GM12878 (cell line): ENCODE measurements at regions of chr1 and their contacts with region 1.

Region 1: GRCh38 chr1:26900001-26900814 is at the start of gene GPATCH3:
- DNase-seq: peak; percentile 79
- ATAC-seq: peak; percentile 96
- H3K4me3 ChIP-seq: peak within 1 kb of the TSS; percentile 85
- H3K27ac ChIP-seq: peak within 1 kb of the TSS; percentile 77
- H3K4me1 ChIP-seq: peaks cover 6% of the 10 kb centered on the region; the same call in 1 of the 2 replicates
- H3K27me3 ChIP-seq: no peaks in the 10 kb centered on the region
- CTCF ChIP-seq: no peak
- EP300 ChIP-seq: no peak
- POLR2A ChIP-seq: peak; percentile 98
- RAD21 ChIP-seq: no peak
- polyA plus RNA-seq, gene GPATCH3: 0.56 to 2.9 TPM

Region 2: DNA sequence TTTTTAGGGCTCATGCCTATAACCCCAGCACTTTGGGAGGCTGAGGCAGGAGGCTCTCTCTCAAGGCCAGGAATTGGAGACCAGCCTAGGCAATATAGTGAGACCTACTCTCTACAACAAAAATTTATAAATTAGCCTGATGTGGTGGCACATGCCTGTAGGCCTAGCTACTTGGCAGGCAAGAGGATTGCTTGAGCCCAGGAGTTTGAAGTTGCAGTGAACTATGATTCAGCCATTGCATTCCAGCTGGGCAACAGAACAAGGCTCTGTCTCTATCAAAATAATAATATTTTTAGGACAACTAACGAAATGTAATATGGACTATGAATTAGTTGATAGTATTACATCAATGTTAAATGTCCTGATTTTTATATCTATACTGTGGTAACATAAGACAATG is 273.2 kb before region 1 on chr1:
- CTCF ChIA-PET with region 1: no interaction called
- POLR2A ChIA-PET with region 1: no interaction called
- RAD21 ChIA-PET with region 1: no interaction called
- SMC1A ChIA-PET with region 1: no interaction called
- in situ Hi-C with region 1: no loop called
- intact Hi-C with region 1: no loop called
- DNase-seq: no peak
- ATAC-seq: no peak
- H3K4me3 ChIP-seq: no peak overlapping the region
- H3K27ac ChIP-seq: no peak overlapping the region
- H3K4me1 ChIP-seq: peaks cover 10% of the 10 kb centered on the region
- H3K27me3 ChIP-seq: no peaks in the 10 kb centered on the region
- CTCF ChIP-seq: no peak
- EP300 ChIP-seq: no peak
- POLR2A ChIP-seq: no peak
- RAD21 ChIP-seq: no peak

Region 3: GRCh38 chr1:26889551-26890466 is 10.4 kb before region 1 on chr1 and contains the start of gene GPN2:
- CTCF ChIA-PET with region 1: interaction called, 6 read pairs
- POLR2A ChIA-PET with region 1: interaction called, 33 read pairs
- RAD21 ChIA-PET with region 1: interaction called, 4 read pairs
- SMC1A ChIA-PET with region 1: interaction called, 18 read pairs
- in situ Hi-C with region 1: no loop called
- intact Hi-C with region 1: no loop called
- DNase-seq: peak; percentile 46
- ATAC-seq: peak; percentile 98
- H3K4me3 ChIP-seq: peak within 1 kb of the TSS; percentile 96
- H3K27ac ChIP-seq: peak within 1 kb of the TSS; percentile 82
- H3K4me1 ChIP-seq: peaks cover 9% of the 10 kb centered on the region
- H3K27me3 ChIP-seq: no peaks in the 10 kb centered on the region
- CTCF ChIP-seq: no peak
- EP300 ChIP-seq: no peak; a peak in 1 of 4 replicates
- POLR2A ChIP-seq: peak; percentile 94
- RAD21 ChIP-seq: no peak
- polyA plus RNA-seq, gene GPN2: 8.3 to 17.4 TPM

Region 4: GRCh38 chr1:26921540-26922430 is 21.6 kb after region 1 on chr1 and contains the start of gene NUDC:
- CTCF ChIA-PET with region 1: no interaction called
- POLR2A ChIA-PET with region 1: interaction called, 12 read pairs
- RAD21 ChIA-PET with region 1: interaction called, 3 read pairs
- SMC1A ChIA-PET with region 1: interaction called, 11 read pairs
- in situ Hi-C with region 1: no loop called
- intact Hi-C with region 1: no loop called
- DNase-seq: peak; percentile 88
- ATAC-seq: peak; percentile 99
- H3K4me3 ChIP-seq: peak within 1 kb of the TSS; percentile 76
- H3K27ac ChIP-seq: peak within 1 kb of the TSS; percentile 83
- H3K4me1 ChIP-seq: peaks cover 5% of the 10 kb centered on the region; the same call in 1 of the 2 replicates
- H3K27me3 ChIP-seq: no peaks in the 10 kb centered on the region
- CTCF ChIP-seq: no peak
- EP300 ChIP-seq: no peak
- POLR2A ChIP-seq: peak; percentile 98
- RAD21 ChIP-seq: no peak
- polyA plus RNA-seq, gene NUDC: 5.5 to 15.1 TPM

Region 5: GRCh38 chr1:27179379-27179778 is 279.2 kb after region 1 on chr1:
- CTCF ChIA-PET with region 1: no interaction called
- POLR2A ChIA-PET with region 1: no interaction called
- RAD21 ChIA-PET with region 1: no interaction called
- SMC1A ChIA-PET with region 1: no interaction called
- in situ Hi-C with region 1: no loop called
- intact Hi-C with region 1: no loop called
- DNase-seq: no peak
- ATAC-seq: no peak
- H3K4me3 ChIP-seq: no peak overlapping the region
- H3K27ac ChIP-seq: no peak overlapping the region
- H3K4me1 ChIP-seq: no peaks in the 10 kb centered on the region
- H3K27me3 ChIP-seq: no peaks in the 10 kb centered on the region
- CTCF ChIP-seq: no peak
- EP300 ChIP-seq: no peak
- POLR2A ChIP-seq: no peak
- RAD21 ChIP-seq: no peak